Common myeloid progenitor, CD34-positive (primary cell): ENCODE measurements at regions of chr21 and their contacts with region 1.

Region 1: GRCh38 chr21:44360159-44360558 is 6.7 kb downstream of the TRPM2 start:
- DNase-seq: peak; percentile 64 to 90 (median 85)
- H3K4me3 ChIP-seq: peak overlapping the region; percentile 17 to 72 (median 48)
- H3K27ac ChIP-seq: no peak overlapping the region
- H3K4me1 ChIP-seq: peaks cover 0 to 26% (median 18%) of the 10 kb centered on the region in 4 experiments
- H3K27me3 ChIP-seq: no peaks in the 10 kb centered on the region

Region 2: GRCh38 chr21:44338971-44339910 is 20.9 kb before region 1 on chr21 and contains the start of gene CFAP410:
- CTCF ChIA-PET with region 1: interaction called, 12 read pairs
- POLR2A ChIA-PET with region 1: no interaction called
- DNase-seq: peak; percentile 95 to 98 (median 98)
- H3K4me3 ChIP-seq: peak within 1 kb of the TSS; percentile 73 to 92 (median 87)
- H3K27ac ChIP-seq: peak within 1 kb of the TSS; percentile 89 to 96
- H3K4me1 ChIP-seq: peaks cover 9 to 28% (median 20%) of the 10 kb centered on the region in 4 experiments
- H3K27me3 ChIP-seq: no peaks in the 10 kb centered on the region

Region 3: DNA sequence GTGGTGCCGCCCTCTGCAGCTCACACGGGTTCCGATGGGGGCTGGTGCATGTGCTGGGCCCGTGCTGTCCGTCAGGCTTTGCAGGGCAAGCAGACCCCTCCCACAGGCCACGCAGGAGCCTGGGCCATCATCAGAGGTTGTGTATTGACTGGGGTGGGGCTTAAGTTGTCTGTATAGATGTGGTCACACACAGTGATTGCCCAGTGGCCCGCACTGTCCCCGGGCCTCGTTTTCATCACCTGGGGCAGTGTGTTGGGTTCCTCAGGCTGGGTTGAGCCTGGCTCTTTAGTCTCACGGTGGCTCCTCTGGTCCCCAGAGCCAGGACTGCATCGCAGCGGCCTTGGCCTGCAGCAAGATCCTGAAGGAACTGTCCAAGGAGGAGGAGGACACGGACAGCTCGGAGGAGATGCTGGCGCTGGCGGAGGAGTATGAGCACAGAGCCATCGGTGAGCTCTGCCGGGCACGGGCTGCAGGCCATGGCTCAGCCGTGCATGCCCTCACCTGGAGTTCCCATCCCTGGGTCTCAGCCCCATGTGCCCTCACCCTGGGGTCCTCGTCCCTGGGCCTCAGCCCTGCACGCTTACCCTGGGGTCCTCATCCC is 37.4 kb after region 1 on chr21:
- CTCF ChIA-PET with region 1: no interaction called
- POLR2A ChIA-PET with region 1: no interaction called
- DNase-seq: no peak
- H3K4me3 ChIP-seq: no peak overlapping the region
- H3K27ac ChIP-seq: no peak overlapping the region
- H3K4me1 ChIP-seq: no peaks in the 10 kb centered on the region
- H3K27me3 ChIP-seq: no peaks in the 10 kb centered on the region